Activated CD4-positive, alpha-beta memory T cell treated with anti-CD3 and anti-CD28 coated beads for 36 hours (primary cell): ENCODE measurements at regions of chr15 and their contacts with region 1.

Region 1: DNA sequence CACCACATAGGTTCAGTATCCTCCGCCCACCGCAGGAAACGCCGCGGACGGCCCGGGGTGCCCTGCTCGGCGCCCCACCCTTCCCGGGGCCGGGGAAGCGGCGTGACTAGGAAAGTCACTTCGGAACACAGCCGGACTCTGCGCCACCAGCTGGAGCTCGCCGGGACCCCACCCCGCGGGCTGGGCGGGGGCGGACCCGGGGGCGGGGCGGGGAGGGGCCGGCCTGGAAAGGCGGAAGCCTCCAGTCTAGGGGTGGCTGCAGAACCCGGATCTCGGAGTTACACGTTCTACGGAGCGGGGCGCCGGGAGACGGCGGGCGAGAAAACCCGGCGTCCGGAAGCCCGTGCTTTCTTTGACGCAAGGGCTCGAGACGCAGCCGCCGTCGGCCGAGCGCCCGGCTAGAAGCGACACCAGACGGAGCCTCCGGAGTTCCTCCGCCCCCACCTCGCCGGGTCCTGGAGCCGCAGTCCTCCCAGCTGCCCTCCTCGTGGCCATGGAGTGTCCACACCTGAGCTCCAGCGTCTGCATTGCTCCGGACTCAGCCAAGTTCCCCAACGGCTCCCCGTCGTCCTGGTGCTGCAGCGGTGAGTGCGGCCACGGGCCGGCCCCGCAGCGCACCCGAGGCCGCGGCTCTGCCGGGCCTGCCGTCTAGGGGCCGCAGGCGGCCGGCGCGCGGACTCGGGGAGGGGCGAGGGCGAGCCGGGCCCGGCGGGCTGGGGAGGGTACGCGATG is at the start of gene USP3:
- DNase-seq: peak; percentile 95
- H3K4me3 Mint-ChIP-seq: peak within 1 kb of the TSS; percentile 90
- H3K27ac Mint-ChIP-seq: peak within 1 kb of the TSS; percentile 99
- H3K4me1 Mint-ChIP-seq: peaks cover 80% of the 10 kb centered on the region
- H3K27me3 Mint-ChIP-seq: no peaks in the 10 kb centered on the region
- total RNA-seq, gene USP3: 46.1 to 48.9 TPM

Region 2: DNA sequence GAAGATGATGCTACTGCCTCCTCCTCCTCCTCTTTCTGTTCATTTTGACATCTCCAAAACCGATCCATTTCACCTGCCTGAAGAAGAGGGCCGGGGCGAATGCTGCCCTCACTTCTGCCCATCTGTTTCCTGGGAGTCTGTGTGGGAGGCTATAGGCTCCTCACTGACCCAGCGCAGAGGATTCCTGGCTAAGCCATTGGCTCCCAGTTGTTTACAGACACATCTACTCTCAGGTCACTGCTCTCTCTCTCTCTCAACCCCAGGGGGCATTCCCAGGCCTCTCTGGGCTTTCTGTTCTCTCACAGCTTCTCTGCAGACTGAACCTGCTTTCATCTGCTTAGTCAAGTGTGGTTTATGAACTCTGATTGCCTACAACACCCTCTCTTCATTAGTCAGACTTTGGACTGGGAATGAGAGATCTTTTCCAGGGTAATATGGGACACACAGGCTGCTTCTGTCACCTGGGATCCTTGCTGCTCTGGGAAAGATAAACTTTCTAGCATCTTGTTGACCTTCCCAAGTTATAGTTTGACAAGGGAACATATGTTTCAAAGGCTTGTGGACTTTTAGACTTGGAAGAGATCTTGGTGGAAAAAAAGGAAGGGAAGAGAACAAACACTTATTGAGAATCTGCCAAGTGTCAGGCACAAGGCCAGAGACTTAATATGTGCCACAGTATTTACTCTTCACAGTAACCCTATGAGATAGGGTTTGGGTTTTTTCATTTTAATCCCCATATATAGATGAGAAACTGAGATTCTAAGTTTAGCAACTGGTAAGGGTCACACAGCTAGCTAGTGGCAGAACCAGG is 30.2 kb before region 1 on chr15:
- CTCF ChIA-PET with region 1: interaction called, 19 read pairs
- POLR2A ChIA-PET with region 1: interaction called, 9 read pairs
- intact Hi-C with region 1: loop called (anchors 1 kb)
- DNase-seq: peak; percentile 84
- H3K4me3 Mint-ChIP-seq: peak overlapping the region; percentile 43
- H3K27ac Mint-ChIP-seq: peak overlapping the region; percentile 72
- H3K4me1 Mint-ChIP-seq: peaks cover 55% of the 10 kb centered on the region
- H3K27me3 Mint-ChIP-seq: no peaks in the 10 kb centered on the region

Region 3: GRCh38 chr15:63487076-63487757 is 17.2 kb before region 1 on chr15:
- CTCF ChIA-PET with region 1: interaction called, 76 read pairs
- POLR2A ChIA-PET with region 1: interaction called, 25 read pairs
- intact Hi-C with region 1: no loop called
- DNase-seq: peak; percentile 93
- H3K4me3 Mint-ChIP-seq: peak overlapping the region; percentile 56
- H3K27ac Mint-ChIP-seq: peak overlapping the region; percentile 49
- H3K4me1 Mint-ChIP-seq: peaks cover 62% of the 10 kb centered on the region
- H3K27me3 Mint-ChIP-seq: no peaks in the 10 kb centered on the region

Region 4: GRCh38 chr15:63576441-63576840 is 72.0 kb after region 1 on chr15:
- CTCF ChIA-PET with region 1: no interaction called
- POLR2A ChIA-PET with region 1: no interaction called
- intact Hi-C with region 1: no loop called
- DNase-seq: no peak
- H3K4me3 Mint-ChIP-seq: no peak overlapping the region
- H3K27ac Mint-ChIP-seq: peak overlapping the region; percentile 3
- H3K4me1 Mint-ChIP-seq: peaks cover 14% of the 10 kb centered on the region
- H3K27me3 Mint-ChIP-seq: no peaks in the 10 kb centered on the region

Region 5: GRCh38 chr15:63593705-63594671 is 89.6 kb after region 1 on chr15:
- CTCF ChIA-PET with region 1: interaction called, 36 read pairs
- POLR2A ChIA-PET with region 1: interaction called, 29 read pairs
- intact Hi-C with region 1: loop called (anchors 2 kb)
- DNase-seq: peak; percentile 82
- H3K4me3 Mint-ChIP-seq: peak overlapping the region; percentile 6
- H3K27ac Mint-ChIP-seq: peak overlapping the region; percentile 86
- H3K4me1 Mint-ChIP-seq: peaks cover 68% of the 10 kb centered on the region
- H3K27me3 Mint-ChIP-seq: no peaks in the 10 kb centered on the region

Region 6: DNA sequence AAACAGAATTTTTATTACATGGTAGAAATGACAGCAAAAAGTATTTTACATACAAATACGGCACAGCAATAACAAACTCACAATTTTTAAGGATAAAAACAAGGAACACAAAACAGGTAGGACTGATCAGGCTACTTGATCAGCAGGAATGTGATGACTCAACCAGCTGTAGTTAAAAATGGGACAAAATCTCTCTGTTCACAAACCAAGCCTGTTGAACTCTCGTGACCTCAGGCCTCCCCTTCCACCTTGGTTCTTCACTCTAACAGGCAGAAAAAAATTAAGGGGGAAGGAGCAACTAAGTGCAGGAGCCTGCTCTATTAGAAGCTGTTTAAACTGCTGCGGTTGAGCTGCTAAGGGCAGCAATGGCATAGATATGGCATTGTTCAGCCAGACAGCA is 111.5 kb after region 1 on chr15:
- CTCF ChIA-PET with region 1: no interaction called
- POLR2A ChIA-PET with region 1: no interaction called
- intact Hi-C with region 1: no loop called
- DNase-seq: no peak
- H3K4me3 Mint-ChIP-seq: no peak overlapping the region
- H3K27ac Mint-ChIP-seq: no peak overlapping the region
- H3K4me1 Mint-ChIP-seq: peaks cover 2% of the 10 kb centered on the region
- H3K27me3 Mint-ChIP-seq: no peaks in the 10 kb centered on the region

Region 7: GRCh38 chr15:64162870-64163658 is 658.7 kb after region 1 on chr15 and contains the start of gene PPIB:
- CTCF ChIA-PET with region 1: no interaction called
- POLR2A ChIA-PET with region 1: no interaction called
- intact Hi-C with region 1: loop called (anchors 2 kb)
- DNase-seq: peak; percentile 98
- H3K4me3 Mint-ChIP-seq: peak within 1 kb of the TSS; percentile 88
- H3K27ac Mint-ChIP-seq: peak within 1 kb of the TSS; percentile 94
- H3K4me1 Mint-ChIP-seq: peaks cover 43% of the 10 kb centered on the region
- H3K27me3 Mint-ChIP-seq: no peaks in the 10 kb centered on the region
- total RNA-seq, gene PPIB: 277 to 283 TPM